Activated CD8-positive, alpha-beta memory T cell treated with anti-CD3 and anti-CD28 coated beads, Interleukin-2, amount 10 ng/mL, durations not matched to agents 7 days and 5 days (primary cell): ENCODE measurements at regions of chr1 and their contacts with region 1.

Region 1: GRCh38 chr1:63537940-63538339 is 14.6 kb downstream of the EFCAB7 start:
- DNase-seq: no peak
- ATAC-seq: no peak
- H3K4me3 Mint-ChIP-seq: no peak overlapping the region
- H3K27ac Mint-ChIP-seq: no peak overlapping the region
- H3K4me1 Mint-ChIP-seq: no peaks in the 10 kb centered on the region
- H3K27me3 Mint-ChIP-seq: no peaks in the 10 kb centered on the region

Region 2: DNA sequence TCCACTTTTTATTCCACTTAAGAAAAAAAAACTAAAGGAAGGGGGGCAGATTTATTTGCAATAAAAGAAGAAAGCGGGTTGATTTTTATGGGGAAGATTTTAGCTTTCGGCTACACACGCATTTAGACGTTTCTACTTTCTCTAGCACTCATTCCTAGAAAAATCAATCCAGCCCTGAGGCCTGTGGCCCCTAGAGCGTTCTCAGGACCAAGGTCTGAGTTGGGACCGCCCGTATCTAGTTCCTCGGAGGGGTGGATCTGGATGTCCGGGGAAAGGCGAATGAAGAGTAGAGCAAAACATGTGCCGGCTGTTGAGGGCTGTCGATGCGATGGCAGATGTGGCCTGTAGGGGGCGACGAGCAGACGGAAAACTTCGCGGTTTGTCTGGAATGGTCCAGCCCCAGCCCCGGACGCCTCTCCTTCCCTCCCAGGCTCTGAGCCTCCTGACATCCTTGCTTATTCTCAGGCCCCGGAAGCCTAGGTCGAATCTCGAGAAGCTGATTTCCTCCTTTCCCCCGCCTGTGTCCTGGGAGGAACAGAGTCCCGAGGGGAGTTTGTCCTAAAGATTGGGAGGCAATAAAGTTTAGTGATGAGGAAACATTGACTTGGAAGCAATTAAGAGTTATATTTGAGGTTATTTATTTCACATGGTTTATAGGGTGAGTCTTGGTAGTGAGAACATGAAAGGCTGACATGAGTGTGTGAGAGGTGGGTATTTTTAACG is 210.4 kb before region 1 on chr1:
- CTCF ChIA-PET with region 1: interaction called, 27 read pairs
- DNase-seq: peak; percentile 73
- ATAC-seq: peak; percentile 52
- H3K4me3 Mint-ChIP-seq: peak overlapping the region; percentile 36
- H3K27ac Mint-ChIP-seq: peak overlapping the region; percentile 63
- H3K4me1 Mint-ChIP-seq: peaks cover 26% of the 10 kb centered on the region
- H3K27me3 Mint-ChIP-seq: peaks cover 82% of the 10 kb centered on the region

Region 3: DNA sequence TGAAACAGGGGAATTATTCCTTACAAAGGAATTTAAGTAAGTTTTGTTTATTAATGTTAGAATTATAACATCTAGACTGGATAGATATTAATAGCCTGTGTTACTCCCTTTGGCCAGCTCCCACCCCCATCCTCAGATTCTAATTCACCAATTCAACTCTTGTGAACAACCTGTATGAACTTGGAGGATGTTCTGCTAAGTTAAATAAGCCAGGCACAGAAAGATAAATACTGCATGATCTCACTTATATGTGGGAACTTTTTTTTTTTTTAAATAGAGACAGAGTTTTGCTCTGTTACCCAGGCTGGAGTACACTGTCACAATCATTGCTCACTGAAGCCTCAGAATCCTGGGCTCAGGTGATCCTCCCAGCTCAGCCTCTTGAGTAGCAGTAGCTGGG is 17.5 kb after region 1 on chr1:
- CTCF ChIA-PET with region 1: interaction called, 13 read pairs
- DNase-seq: no peak
- ATAC-seq: no peak
- H3K4me3 Mint-ChIP-seq: no peak overlapping the region
- H3K27ac Mint-ChIP-seq: no peak overlapping the region
- H3K4me1 Mint-ChIP-seq: peaks cover 4% of the 10 kb centered on the region
- H3K27me3 Mint-ChIP-seq: no peaks in the 10 kb centered on the region